ENCODE measurements at regions of chr4 and their contacts with region 1.

Region 1: GRCh38 chr4:77959566-77960338 is 97.1 kb downstream of the MRPL1 start:
- DNase-seq: no peak
- H3K4me3 ChIP-seq: peak overlapping the region; percentile 28
- H3K27ac ChIP-seq: no peak overlapping the region
- H3K4me1 ChIP-seq: no peaks in the 10 kb centered on the region
- H3K27me3 ChIP-seq: no peaks in the 10 kb centered on the region
- CTCF ChIP-seq: peak; percentile 74

Region 2: GRCh38 chr4:77899607-77900006 is 60.1 kb before region 1 on chr4:
- intact Hi-C with region 1: no loop called
- DNase-seq: no peak
- H3K4me3 ChIP-seq: no peak overlapping the region
- H3K27ac ChIP-seq: no peak overlapping the region
- H3K4me1 ChIP-seq: no peaks in the 10 kb centered on the region
- H3K27me3 ChIP-seq: no peaks in the 10 kb centered on the region
- CTCF ChIP-seq: no peak

Region 3: DNA sequence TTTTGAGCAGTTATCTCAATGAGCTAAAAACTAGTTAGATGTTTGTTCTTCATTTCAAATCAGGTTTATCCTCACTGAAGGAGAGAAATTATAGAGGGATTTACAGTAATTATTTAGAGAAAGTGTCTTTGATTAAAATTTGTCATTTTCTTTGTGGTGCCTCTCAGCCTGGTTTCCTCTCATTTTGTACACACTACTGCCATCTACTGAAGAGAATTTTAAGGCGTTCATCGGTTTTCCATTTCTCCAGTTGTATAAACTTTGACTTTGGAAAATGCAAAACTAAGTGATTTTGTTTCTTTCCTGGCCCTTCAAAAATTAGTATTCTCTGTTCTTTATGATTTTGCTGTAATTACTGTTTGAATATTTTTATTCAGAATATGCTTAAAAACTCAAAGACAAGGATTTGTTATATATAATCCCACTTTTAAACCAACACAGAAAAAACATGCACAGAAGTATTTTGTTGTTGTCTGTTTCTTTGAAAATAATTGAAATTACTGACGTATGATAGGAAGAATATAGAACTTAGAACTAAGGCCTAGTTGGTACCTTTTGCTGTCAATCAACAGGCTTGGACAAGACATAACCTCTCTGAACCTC is 557.4 kb after region 1 on chr4:
- intact Hi-C with region 1: loop called (anchors 10 kb)
- DNase-seq: no peak
- H3K4me3 ChIP-seq: no peak overlapping the region
- H3K27ac ChIP-seq: no peak overlapping the region
- H3K4me1 ChIP-seq: peaks cover 24% of the 10 kb centered on the region
- H3K27me3 ChIP-seq: no peaks in the 10 kb centered on the region
- CTCF ChIP-seq: peak; percentile 79

Measured in left ventricle myocardium inferior (tissue), 1 donor.